ENCODE measurements at regions of chr3 and their contacts with region 1.

Region 1: GRCh38 chr3:196518966-196519717 is 4.0 kb upstream of the SMCO1 start:
- DNase-seq: peak; percentile 82
- ATAC-seq: peak; percentile 96
- H3K4me3 ChIP-seq: peak overlapping the region in 1 of 3 experiments; percentile 38; a peak in 2 of 6 replicates
- H3K27ac ChIP-seq: no peak overlapping the region
- H3K4me1 ChIP-seq: peaks cover 19% of the 10 kb centered on the region
- H3K27me3 ChIP-seq: peaks cover 0 to 17% of the 10 kb centered on the region in 2 experiments; a peak in 2 of 5 replicates
- CTCF ChIP-seq: peak; percentile 92
- EP300 ChIP-seq: no peak
- POLR2A ChIP-seq: no peak
- RAD21 ChIP-seq: peak; percentile 88

Region 2: GRCh38 chr3:196020373-196020772 is 498.8 kb before region 1 on chr3:
- CTCF ChIA-PET with region 1: interaction called, 4 read pairs
- POLR2A ChIA-PET with region 1: interaction called, 3 read pairs
- in situ Hi-C with region 1: loop called (anchors 10 kb)
- intact Hi-C with region 1: no loop called
- DNase-seq: no peak
- ATAC-seq: no peak
- H3K4me3 ChIP-seq: no peak overlapping the region
- H3K27ac ChIP-seq: no peak overlapping the region
- H3K4me1 ChIP-seq: no peaks in the 10 kb centered on the region
- H3K27me3 ChIP-seq: peaks cover 0 to 9% of the 10 kb centered on the region in 2 experiments; a peak in 1 of 5 replicates
- CTCF ChIP-seq: no peak
- EP300 ChIP-seq: no peak
- POLR2A ChIP-seq: no peak
- RAD21 ChIP-seq: no peak

Region 3: DNA sequence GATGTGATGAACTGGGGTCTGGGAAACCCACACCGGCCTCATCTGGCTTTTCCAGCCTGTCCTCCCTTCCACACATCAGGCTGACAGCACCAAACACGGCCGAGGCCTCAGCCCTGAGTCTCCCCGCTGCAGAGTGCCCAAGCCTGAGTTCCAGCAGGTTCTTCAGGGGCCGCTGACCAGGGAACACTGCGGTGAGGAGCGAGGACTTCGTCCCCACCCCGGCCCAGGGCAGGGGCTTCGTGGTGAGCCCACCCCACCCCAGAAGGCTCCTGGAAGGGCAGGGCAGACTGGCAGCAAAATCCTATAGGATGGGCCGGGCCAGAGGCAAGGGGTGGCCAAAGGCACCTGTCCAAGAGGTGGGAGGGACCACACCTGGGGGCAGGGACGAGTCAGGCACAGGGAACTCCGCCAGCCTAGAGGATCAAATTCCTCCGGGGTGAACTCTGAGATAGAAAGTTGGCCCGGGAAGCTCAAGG is 303.0 kb before region 1 on chr3 and contains the start of gene SLC51A:
- CTCF ChIA-PET with region 1: no interaction called
- POLR2A ChIA-PET with region 1: no interaction called
- in situ Hi-C with region 1: no loop called
- intact Hi-C with region 1: loop called (anchors 5 kb)
- DNase-seq: no peak
- ATAC-seq: peak; percentile 59
- H3K4me3 ChIP-seq: peak within 1 kb of the TSS; percentile 55 to 79 (median 63)
- H3K27ac ChIP-seq: peak within 1 kb of the TSS; percentile 71
- H3K4me1 ChIP-seq: peaks cover 88% of the 10 kb centered on the region
- H3K27me3 ChIP-seq: no peaks in the 10 kb centered on the region; a peak in 1 of 5 replicates
- CTCF ChIP-seq: no peak
- EP300 ChIP-seq: no peak
- POLR2A ChIP-seq: no peak; a peak in 1 of 4 replicates
- RAD21 ChIP-seq: no peak
- total RNA-seq, gene SLC51A: 3.8 and 4.3 TPM in 2 replicates

Region 4: DNA sequence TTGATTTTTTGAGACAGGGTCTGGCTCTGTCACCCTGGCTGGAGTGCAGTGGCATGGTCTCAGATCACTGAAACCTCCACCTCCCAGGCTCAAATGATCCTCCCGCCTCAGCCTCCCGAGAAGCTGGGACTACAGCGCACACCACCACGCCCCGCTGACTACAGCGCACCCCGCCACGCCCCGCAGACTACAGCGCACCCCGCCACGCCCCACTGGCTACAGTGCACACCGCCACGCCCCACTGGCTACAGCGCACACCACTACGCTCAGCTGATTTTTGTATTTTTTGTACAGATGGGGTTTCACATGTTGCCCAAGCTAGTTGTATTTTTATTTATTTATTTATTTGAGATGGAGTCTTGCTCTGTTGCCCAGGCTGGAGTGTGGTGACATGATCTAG is 267.2 kb before region 1 on chr3:
- CTCF ChIA-PET with region 1: interaction called, 28 read pairs
- POLR2A ChIA-PET with region 1: no interaction called
- in situ Hi-C with region 1: loop called (anchors 5 kb)
- intact Hi-C with region 1: loop called (anchors 1 kb)
- DNase-seq: no peak
- ATAC-seq: no peak
- H3K4me3 ChIP-seq: no peak overlapping the region
- H3K27ac ChIP-seq: no peak overlapping the region
- H3K4me1 ChIP-seq: peaks cover 17% of the 10 kb centered on the region
- H3K27me3 ChIP-seq: no peaks in the 10 kb centered on the region
- CTCF ChIP-seq: no peak
- EP300 ChIP-seq: no peak
- POLR2A ChIP-seq: no peak
- RAD21 ChIP-seq: no peak

Region 5: GRCh38 chr3:196486263-196486662 is 32.9 kb before region 1 on chr3:
- CTCF ChIA-PET with region 1: interaction called, 24 read pairs
- POLR2A ChIA-PET with region 1: no interaction called
- in situ Hi-C with region 1: no loop called
- intact Hi-C with region 1: loop called (anchors 1 kb)
- DNase-seq: no peak
- ATAC-seq: peak; percentile 65
- H3K4me3 ChIP-seq: no peak overlapping the region
- H3K27ac ChIP-seq: no peak overlapping the region
- H3K4me1 ChIP-seq: peaks cover 23% of the 10 kb centered on the region
- H3K27me3 ChIP-seq: no peaks in the 10 kb centered on the region; a peak in 1 of 5 replicates
- CTCF ChIP-seq: peak; percentile 69
- EP300 ChIP-seq: no peak
- POLR2A ChIP-seq: no peak
- RAD21 ChIP-seq: no peak; the same call in 1 of the 2 replicates

Region 6: DNA sequence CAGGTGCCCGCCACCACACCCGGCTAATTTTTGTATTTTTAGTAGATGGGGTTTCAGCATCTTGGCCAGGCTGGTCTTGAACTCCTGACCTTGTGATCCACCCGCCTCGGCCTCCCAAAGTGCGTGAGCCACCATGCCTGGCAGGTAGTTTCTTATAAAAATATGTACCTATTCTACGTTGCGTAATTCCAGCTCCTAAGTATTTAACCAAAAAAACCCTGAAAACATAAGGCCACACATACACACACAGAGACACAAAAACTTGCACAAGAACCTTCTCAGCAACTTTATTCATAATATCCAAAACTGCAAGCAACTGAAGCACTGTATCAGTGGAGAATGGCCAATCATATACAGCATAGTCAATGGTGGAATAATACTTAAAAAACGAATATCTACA is 20.8 kb before region 1 on chr3:
- CTCF ChIA-PET with region 1: no interaction called
- POLR2A ChIA-PET with region 1: no interaction called
- in situ Hi-C with region 1: no loop called
- intact Hi-C with region 1: no loop called
- DNase-seq: no peak
- ATAC-seq: no peak
- H3K4me3 ChIP-seq: no peak overlapping the region
- H3K27ac ChIP-seq: no peak overlapping the region
- H3K4me1 ChIP-seq: peaks cover 28% of the 10 kb centered on the region
- H3K27me3 ChIP-seq: no peaks in the 10 kb centered on the region; a peak in 1 of 5 replicates
- CTCF ChIP-seq: no peak
- EP300 ChIP-seq: no peak
- POLR2A ChIP-seq: no peak
- RAD21 ChIP-seq: no peak

Measured in HepG2 (cell line).